B cell (primary cell): ENCODE measurements at regions of chr17 and their contacts with region 1.

Region 1: DNA sequence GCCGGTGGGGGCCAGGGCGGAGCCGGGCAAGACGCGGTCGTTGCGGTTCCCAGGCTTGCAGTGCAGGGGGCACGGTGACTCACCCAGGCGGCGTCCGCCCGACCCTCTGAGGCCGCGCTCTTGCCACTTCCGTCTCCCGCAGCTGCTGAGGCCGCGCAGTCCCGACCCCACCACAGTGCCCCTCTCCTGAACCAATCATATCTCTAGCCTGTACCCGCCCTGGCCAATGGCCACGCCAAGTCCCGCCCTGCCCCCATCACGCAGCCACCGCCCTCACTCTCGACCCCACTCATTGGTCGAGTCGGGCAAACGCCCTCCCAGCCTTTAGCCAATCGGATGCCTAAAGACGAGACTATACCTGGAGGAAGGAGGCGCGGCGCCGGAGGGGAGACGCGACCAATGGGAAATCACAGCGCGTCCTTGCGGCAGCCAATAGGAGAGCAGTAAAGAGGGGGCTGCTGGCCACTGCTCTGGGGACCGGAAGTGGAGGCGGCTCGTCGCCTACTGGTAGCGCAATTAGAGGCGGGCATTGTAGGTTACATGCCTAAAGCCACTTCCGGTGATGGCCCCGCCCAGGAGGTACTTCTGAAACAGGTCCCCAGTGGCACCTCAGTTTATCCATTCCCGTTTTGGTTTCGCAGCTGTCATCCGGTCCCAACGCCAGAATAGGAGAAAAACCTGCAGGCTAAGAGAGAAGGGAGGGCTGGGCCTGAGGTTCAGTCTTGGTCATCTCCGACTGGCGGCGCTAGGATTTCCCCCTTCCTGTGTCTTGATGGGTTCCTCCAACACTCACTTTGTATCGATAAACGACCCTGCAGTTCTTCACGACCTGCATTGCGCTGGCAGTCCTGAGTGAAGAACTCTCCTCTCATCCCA is 3.5 kb upstream of the MTMR4 start:
- DNase-seq: peak; percentile 100
- ATAC-seq: peak; percentile 78
- H3K4me3 ChIP-seq: peak overlapping the region; percentile 88 to 99 (median 93)
- H3K4me3 Mint-ChIP-seq: peak overlapping the region; percentile 97
- H3K27ac ChIP-seq: peak overlapping the region; percentile 83 to 85
- H3K27ac Mint-ChIP-seq: peak overlapping the region; percentile 97
- H3K4me1 ChIP-seq: peaks cover 35 to 54% of the 10 kb centered on the region in 2 donors
- H3K4me1 Mint-ChIP-seq: peaks cover 43% of the 10 kb centered on the region
- H3K27me3 ChIP-seq: no peaks in the 10 kb centered on the region
- H3K27me3 Mint-ChIP-seq: no peaks in the 10 kb centered on the region
- CTCF ChIP-seq: no peak

Region 2: DNA sequence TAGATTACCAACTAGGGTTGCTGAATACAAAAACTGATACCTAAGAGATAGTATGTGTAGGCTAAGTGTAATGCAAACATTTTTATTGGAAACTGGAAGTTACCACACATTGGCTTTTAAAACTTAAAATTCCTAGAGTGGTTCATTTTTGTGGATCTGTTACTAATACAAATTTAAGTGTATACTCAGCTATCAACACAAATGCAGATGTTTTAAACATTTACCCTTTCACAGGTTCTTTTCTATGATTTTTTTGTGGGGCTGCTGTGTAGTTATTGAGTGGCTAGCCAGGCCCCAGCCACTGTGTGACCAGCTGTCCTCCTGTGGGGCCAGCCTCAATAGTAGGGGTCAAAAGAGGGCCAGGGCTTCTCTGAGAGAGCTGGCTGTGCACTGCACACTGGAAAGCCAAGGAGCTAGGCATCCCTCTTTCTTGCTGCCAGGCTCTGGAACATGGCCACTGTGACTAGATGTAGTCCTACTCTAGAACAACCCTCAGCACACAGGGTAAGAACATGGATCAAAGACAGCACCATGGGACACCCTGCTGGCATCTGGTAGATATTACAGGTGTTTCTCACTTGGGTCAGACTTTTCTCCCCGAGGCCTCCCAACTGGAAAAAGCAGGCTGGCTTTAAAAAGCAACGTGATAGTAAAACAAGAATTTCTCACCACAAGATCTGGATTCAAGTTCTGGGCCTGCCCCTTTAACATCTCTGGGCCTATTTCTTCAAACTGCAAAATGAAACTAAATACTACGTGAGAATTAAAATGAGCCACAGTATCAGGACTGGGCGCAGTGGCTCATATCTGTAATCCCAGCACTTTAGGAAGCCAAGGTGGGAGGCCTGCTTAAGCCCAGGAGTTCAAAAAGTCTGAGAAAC is 522.7 kb before region 1 on chr17:
- CTCF ChIA-PET with region 1: no interaction called
- POLR2A ChIA-PET with region 1: no interaction called
- intact Hi-C with region 1: no loop called
- DNase-seq: peak; percentile 71
- ATAC-seq: peak; percentile 87
- H3K4me3 ChIP-seq: no peak overlapping the region
- H3K4me3 Mint-ChIP-seq: no peak overlapping the region
- H3K27ac ChIP-seq: peak overlapping the region in 1 of 2 donors; percentile 47
- H3K27ac Mint-ChIP-seq: peak overlapping the region; percentile 4
- H3K4me1 ChIP-seq: peaks cover 20 to 25% of the 10 kb centered on the region in 2 donors
- H3K4me1 Mint-ChIP-seq: peaks cover 35% of the 10 kb centered on the region
- H3K27me3 ChIP-seq: no peaks in the 10 kb centered on the region
- H3K27me3 Mint-ChIP-seq: no peaks in the 10 kb centered on the region
- CTCF ChIP-seq: peak; percentile 76

Region 3: GRCh38 chr17:58082870-58083490 is 435.0 kb before region 1 on chr17 and contains the start of gene DYNLL2:
- CTCF ChIA-PET with region 1: no interaction called
- POLR2A ChIA-PET with region 1: no interaction called
- intact Hi-C with region 1: loop called (anchors 5 kb)
- DNase-seq: peak; percentile 90
- ATAC-seq: peak; percentile 80
- H3K4me3 ChIP-seq: peak within 1 kb of the TSS; percentile 70 to 89 (median 79)
- H3K4me3 Mint-ChIP-seq: peak within 1 kb of the TSS; percentile 87
- H3K27ac ChIP-seq: peak within 1 kb of the TSS; percentile 66 to 86
- H3K27ac Mint-ChIP-seq: peak within 1 kb of the TSS; percentile 81
- H3K4me1 ChIP-seq: peaks cover 16 to 19% of the 10 kb centered on the region in 2 donors
- H3K4me1 Mint-ChIP-seq: peaks cover 31% of the 10 kb centered on the region
- H3K27me3 ChIP-seq: peaks cover 0 to 5% (median 0%) of the 10 kb centered on the region in 4 experiments
- H3K27me3 Mint-ChIP-seq: no peaks in the 10 kb centered on the region
- CTCF ChIP-seq: no peak
- total RNA-seq, gene DYNLL2: 24.4 and 25.2 TPM in 2 replicates

Region 4: GRCh38 chr17:58352014-58352842 is 165.7 kb before region 1 on chr17 and contains the start of gene SUPT4H1:
- CTCF ChIA-PET with region 1: no interaction called
- POLR2A ChIA-PET with region 1: no interaction called
- intact Hi-C with region 1: loop called (anchors 1 kb)
- DNase-seq: peak; percentile 98
- ATAC-seq: peak; percentile 94
- H3K4me3 ChIP-seq: peak within 1 kb of the TSS; percentile 82 to 99 (median 91)
- H3K4me3 Mint-ChIP-seq: peak within 1 kb of the TSS; percentile 100
- H3K27ac ChIP-seq: peak within 1 kb of the TSS; percentile 91 to 95
- H3K27ac Mint-ChIP-seq: peak within 1 kb of the TSS; percentile 99
- H3K4me1 ChIP-seq: peaks cover 21 to 28% of the 10 kb centered on the region in 2 donors
- H3K4me1 Mint-ChIP-seq: peaks cover 47% of the 10 kb centered on the region
- H3K27me3 ChIP-seq: no peaks in the 10 kb centered on the region
- H3K27me3 Mint-ChIP-seq: no peaks in the 10 kb centered on the region
- CTCF ChIP-seq: no peak
- total RNA-seq, gene SUPT4H1: 49.3 and 60.1 TPM in 2 replicates

Region 5: DNA sequence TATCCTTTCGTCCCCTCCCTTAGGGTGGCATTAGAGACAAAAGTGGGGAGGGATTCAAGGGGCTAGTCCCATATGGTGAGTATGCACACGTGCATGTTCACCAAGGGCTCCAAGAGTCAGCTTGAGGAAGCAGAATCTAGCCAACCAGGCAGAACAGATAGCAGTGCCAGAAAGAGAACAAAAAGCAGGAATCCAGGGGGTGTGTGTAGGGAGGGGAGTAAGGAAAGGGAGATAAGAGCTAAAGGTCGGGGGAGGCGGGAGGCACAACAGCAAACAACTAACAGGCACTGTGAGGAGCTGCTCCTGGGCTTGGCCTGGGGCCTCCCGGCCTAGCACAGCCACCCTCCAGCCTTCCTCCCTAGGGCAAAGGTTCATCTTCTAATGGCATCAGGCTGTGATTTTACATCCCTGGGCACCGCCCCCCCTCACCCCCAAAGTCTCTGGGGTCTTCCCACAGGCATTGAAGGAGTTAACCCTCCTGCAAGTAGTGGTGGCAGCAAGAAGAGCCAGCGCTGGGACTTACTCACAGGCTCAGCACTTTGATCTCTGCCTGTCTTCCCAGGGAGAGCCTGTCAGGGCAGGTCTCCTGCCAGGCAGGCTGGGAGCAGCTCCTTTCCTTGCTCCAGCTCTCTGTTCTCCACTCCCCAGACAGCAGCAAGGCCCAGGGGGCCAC is 153.6 kb before region 1 on chr17:
- CTCF ChIA-PET with region 1: no interaction called
- POLR2A ChIA-PET with region 1: no interaction called
- intact Hi-C with region 1: no loop called
- DNase-seq: no peak
- ATAC-seq: no peak
- H3K4me3 ChIP-seq: no peak overlapping the region
- H3K4me3 Mint-ChIP-seq: no peak overlapping the region
- H3K27ac ChIP-seq: no peak overlapping the region
- H3K27ac Mint-ChIP-seq: no peak overlapping the region
- H3K4me1 ChIP-seq: peaks cover 7 to 8% of the 10 kb centered on the region in 2 donors
- H3K4me1 Mint-ChIP-seq: peaks cover 10% of the 10 kb centered on the region
- H3K27me3 ChIP-seq: no peaks in the 10 kb centered on the region
- H3K27me3 Mint-ChIP-seq: no peaks in the 10 kb centered on the region
- CTCF ChIP-seq: no peak

Region 6: DNA sequence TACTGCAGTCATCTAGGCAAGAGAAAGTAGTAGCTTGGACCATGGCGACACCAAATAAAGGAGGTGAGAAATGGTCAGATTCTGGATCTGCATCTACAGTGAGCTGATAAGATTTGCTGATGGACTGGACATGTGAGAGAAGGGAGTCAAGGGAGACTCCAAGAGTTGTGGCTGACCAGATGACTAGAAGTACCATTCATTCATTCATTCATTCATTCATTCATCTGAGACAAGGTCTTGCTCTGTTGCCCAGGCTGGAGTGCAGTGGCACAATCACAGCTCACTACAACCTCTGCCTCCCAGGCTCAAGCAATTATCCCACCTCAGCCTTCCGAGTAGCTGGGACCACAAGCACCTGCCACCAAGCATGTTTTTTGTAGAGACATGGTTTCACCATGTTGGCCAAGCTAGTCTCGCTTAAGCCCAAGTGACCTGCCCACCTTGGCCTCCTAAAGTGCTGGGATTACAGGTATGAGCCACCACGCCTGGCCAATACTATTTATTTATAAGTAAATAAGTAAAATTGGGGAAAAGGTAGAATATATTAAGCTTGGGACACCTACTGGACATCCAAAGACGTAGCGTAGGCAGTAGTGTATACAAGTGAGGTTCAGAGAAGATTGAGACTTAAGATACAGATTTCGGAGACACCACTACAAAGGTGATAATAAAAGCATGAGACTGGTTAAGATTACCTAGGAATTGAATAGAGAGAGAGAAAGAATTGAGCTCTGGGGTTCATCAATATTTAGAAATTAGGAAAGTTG is 85.0 kb before region 1 on chr17:
- CTCF ChIA-PET with region 1: no interaction called
- POLR2A ChIA-PET with region 1: no interaction called
- intact Hi-C with region 1: no loop called
- DNase-seq: no peak
- ATAC-seq: no peak
- H3K4me3 ChIP-seq: no peak overlapping the region
- H3K4me3 Mint-ChIP-seq: no peak overlapping the region
- H3K27ac ChIP-seq: no peak overlapping the region
- H3K27ac Mint-ChIP-seq: no peak overlapping the region
- H3K4me1 ChIP-seq: no peaks in the 10 kb centered on the region
- H3K4me1 Mint-ChIP-seq: peaks cover 2% of the 10 kb centered on the region
- H3K27me3 ChIP-seq: no peaks in the 10 kb centered on the region
- H3K27me3 Mint-ChIP-seq: no peaks in the 10 kb centered on the region
- CTCF ChIP-seq: no peak

Region 7: DNA sequence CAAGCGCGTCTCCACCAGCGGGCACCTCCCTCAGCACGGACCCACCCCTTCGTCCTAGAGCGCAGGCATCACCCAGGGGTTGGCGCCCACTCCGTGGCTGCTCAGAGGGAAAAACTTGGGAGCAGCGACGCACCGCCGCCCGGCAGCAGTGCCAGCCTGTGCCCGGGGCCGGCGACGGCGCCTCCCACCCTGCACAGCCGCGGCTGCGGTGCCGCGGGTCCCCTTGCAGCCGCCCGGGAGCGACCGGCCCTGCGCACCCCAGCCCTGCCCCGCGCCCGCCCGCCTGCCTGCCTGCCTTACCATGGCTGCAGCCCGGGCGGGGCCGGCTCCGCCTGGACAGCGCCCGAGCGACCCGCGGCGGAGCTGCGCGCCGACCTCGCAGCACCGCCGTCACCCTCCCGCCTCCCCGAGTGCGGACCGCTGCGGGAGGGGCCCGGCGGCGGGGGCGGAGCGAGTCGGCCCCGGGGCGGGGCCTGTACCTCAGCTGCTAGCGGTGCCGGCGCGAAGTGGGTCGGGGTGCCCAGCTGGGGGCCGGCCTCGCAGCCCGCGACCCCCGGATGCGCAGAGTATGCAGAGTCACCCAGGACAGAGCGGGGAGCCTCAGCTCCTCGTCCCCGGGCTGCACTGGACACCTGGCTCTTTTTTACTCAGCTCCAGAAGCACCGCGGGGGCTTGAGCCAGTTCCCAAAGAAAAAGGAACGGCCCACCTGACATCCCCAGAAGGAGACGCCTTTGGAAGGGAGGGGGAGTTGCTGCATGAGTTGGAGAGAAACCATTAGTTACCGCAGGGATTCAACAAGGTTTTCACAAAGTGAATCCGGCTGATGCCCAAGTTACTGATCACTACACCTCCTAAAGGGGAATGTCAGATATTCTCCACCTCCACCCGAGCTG is 13.9 kb after region 1 on chr17:
- CTCF ChIA-PET with region 1: interaction called, 11 read pairs
- POLR2A ChIA-PET with region 1: no interaction called
- intact Hi-C with region 1: loop called (anchors 1 kb)
- DNase-seq: peak; percentile 76
- ATAC-seq: peak; percentile 96
- H3K4me3 ChIP-seq: peak overlapping the region in 4 of 5 experiments; percentile 28 to 63 (median 51)
- H3K4me3 Mint-ChIP-seq: peak overlapping the region; percentile 76
- H3K27ac ChIP-seq: no peak overlapping the region
- H3K27ac Mint-ChIP-seq: no peak overlapping the region
- H3K4me1 ChIP-seq: peaks cover 12 to 13% of the 10 kb centered on the region in 2 donors
- H3K4me1 Mint-ChIP-seq: peaks cover 5% of the 10 kb centered on the region
- H3K27me3 ChIP-seq: peaks cover 0 to 52% (median 15%) of the 10 kb centered on the region in 4 experiments
- H3K27me3 Mint-ChIP-seq: peaks cover 45% of the 10 kb centered on the region
- CTCF ChIP-seq: no peak

Region 8: DNA sequence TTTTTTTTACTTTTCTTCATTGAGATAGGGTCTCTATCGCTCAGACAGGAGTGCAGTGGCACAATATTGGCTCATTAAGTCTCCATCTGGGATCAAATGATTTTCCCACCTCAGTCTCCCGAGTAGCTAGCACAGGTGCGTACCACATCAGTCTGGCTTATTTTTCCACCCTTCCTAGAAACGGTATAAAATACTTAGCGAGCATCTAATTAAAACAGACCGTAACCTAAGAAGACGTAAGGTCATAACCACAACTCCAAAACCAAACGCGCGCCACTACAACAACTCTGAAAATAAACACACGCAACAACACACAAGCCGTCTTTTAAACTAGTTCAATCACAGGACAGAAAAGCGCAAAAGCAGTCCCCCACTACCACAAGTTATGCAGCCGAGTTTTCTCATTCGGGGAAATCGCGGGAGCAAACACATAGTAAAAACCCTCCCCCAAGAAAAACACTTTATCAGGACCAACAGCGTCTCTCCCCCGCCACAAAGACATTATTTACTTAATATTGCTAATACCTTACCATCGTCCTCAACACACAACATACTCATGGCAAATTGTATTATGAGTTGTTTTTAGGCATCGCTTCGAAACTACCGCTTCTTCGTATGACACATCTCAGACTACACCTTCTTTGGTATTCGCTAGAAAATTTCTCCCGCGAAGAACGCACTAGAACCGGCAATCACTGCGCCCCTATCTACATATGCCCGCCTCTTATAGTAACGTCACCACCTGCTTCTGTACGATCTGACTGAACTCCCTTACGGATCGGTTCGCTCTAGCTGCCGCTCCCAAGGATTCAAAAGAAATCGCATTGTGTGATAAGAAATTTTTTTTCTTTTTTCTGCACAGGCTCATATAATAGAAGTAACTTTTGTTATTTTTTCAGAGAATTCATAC is 141.1 kb after region 1 on chr17:
- CTCF ChIA-PET with region 1: interaction called, 3 read pairs
- POLR2A ChIA-PET with region 1: interaction called, 7 read pairs
- intact Hi-C with region 1: loop called (anchors 1 kb)
- DNase-seq: peak; percentile 95
- ATAC-seq: peak; percentile 78
- H3K4me3 ChIP-seq: peak overlapping the region; percentile 44 to 82 (median 54)
- H3K4me3 Mint-ChIP-seq: peak overlapping the region; percentile 92
- H3K27ac ChIP-seq: peak overlapping the region; percentile 91 to 97
- H3K27ac Mint-ChIP-seq: peak overlapping the region; percentile 99
- H3K4me1 ChIP-seq: peaks cover 0 to 13% of the 10 kb centered on the region in 2 donors
- H3K4me1 Mint-ChIP-seq: peaks cover 15% of the 10 kb centered on the region
- H3K27me3 ChIP-seq: no peaks in the 10 kb centered on the region
- H3K27me3 Mint-ChIP-seq: no peaks in the 10 kb centered on the region
- CTCF ChIP-seq: no peak

Region 9: DNA sequence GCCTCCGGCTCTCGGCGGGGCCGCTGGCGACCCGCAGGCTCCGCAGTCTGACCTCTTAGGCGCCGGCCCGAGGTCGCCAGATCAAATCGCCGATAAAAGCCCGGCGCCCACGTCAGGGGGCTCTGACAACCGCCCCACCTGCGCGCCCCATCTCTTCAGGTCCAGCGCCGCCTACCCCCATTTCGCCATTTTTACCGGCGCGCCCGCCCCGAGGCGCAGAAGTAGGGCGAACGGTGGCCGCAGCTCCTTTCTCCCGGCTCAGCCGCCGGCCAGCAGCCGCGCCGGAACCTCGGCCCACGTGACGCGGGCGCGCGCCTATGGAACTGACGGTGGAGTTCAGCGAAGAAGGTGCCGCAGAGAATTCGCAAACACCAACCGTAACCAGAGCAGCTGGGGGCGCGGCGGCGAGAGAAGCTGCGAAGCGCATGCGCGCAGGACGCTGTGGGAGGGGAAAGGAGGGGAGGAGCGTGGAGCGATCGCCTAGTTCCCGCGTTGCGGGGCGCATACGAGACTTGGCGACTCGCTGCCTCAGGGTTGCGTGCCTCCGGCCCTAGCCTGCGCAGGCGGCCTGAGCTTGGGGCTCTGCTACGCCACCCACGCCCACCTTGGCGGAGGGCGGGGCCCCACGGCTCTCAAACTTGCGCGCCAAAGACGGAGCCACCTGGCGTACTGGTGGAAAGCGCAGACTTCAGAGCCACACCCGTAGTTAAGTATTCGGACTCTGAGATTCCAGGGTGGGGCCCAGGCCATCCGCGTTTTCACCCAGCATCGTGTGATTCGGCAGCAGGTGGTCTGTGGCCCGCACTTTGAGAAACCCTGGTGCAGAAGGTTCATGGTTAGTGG is 588.7 kb after region 1 on chr17 and contains the start of gene TRIM37:
- CTCF ChIA-PET with region 1: no interaction called
- POLR2A ChIA-PET with region 1: no interaction called
- intact Hi-C with region 1: loop called (anchors 1 kb)
- DNase-seq: peak; percentile 100
- ATAC-seq: peak; percentile 96
- H3K4me3 ChIP-seq: peak within 1 kb of the TSS; percentile 56 to 92 (median 83)
- H3K4me3 Mint-ChIP-seq: peak within 1 kb of the TSS; percentile 94
- H3K27ac ChIP-seq: peak within 1 kb of the TSS; percentile 86 to 88
- H3K27ac Mint-ChIP-seq: peak within 1 kb of the TSS; percentile 93
- H3K4me1 ChIP-seq: peaks cover 11 to 12% of the 10 kb centered on the region in 2 donors
- H3K4me1 Mint-ChIP-seq: peaks cover 27% of the 10 kb centered on the region
- H3K27me3 ChIP-seq: no peaks in the 10 kb centered on the region
- H3K27me3 Mint-ChIP-seq: no peaks in the 10 kb centered on the region
- CTCF ChIP-seq: no peak
- total RNA-seq, gene TRIM37: 28.3 and 33.8 TPM in 2 replicates